Endothelial cell of umbilical vein (primary cell): ENCODE measurements at regions of chr1 and their contacts with region 1.

Region 1: GRCh38 chr1:201895913-201896807 is 7.5 kb downstream of the SHISA4 start:
- DNase-seq: peak; percentile 85
- H3K4me3 ChIP-seq: no peak overlapping the region
- H3K27ac ChIP-seq: no peak overlapping the region
- H3K4me1 ChIP-seq: peaks cover 4% of the 10 kb centered on the region
- H3K27me3 ChIP-seq: no peaks in the 10 kb centered on the region
- CTCF ChIP-seq: peak; percentile 94 to 96
- POLR2A ChIP-seq: no peak

Region 2: GRCh38 chr1:201916649-201917249 is 20.6 kb after region 1 on chr1:
- CTCF ChIA-PET with region 1: interaction called, 19 read pairs
- POLR2A ChIA-PET with region 1: no interaction called
- dilution Hi-C with region 1: no loop called
- intact Hi-C with region 1: loop called (anchors 2 kb)
- DNase-seq: peak; percentile 97
- H3K4me3 ChIP-seq: no peak overlapping the region
- H3K27ac ChIP-seq: peak overlapping the region; percentile 35
- H3K4me1 ChIP-seq: peaks cover 19% of the 10 kb centered on the region
- H3K27me3 ChIP-seq: no peaks in the 10 kb centered on the region
- CTCF ChIP-seq: no peak
- POLR2A ChIP-seq: peak; percentile 50

Region 3: DNA sequence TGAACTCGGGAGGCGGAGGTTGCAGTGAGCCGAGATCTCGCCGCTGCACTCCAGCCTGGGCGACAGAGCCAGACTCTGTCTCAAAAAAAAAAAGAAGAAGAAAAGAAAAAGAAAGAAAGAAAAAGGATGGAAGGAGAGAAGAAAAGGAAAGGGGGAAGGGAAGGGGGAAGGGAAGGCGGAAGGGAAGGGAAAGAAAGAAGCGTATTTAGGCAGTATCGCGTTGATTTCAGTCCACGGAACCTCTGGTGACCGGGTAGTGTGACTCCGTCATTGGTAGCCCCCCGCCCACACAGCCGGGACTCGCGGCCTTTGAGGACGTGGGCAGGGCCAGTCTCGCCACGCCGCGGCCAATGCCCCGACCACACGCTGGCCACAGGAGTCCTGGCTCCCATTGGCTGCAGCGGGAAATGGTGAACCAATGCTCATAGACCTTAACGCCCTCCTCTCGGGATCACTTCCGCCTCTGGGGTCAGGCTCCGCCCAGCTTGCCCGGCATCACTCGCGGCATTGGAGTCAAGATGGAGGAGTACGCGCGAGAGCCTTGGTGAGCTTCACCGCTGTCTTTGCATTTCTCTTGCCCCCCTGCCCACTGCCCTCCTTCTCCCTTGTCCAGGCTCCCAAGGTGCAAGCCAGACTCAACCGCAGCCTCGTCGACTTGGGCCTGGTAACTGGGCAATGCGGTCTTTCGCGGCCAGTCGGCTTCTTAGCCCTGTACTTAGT is 59.0 kb after region 1 on chr1 and contains the start of gene TIMM17A:
- CTCF ChIA-PET with region 1: interaction called, 54 read pairs
- POLR2A ChIA-PET with region 1: interaction called, 3 read pairs
- dilution Hi-C with region 1: no loop called
- intact Hi-C with region 1: loop called (anchors 1 kb)
- DNase-seq: peak; percentile 99
- H3K4me3 ChIP-seq: peak within 1 kb of the TSS; percentile 26 to 87 (median 68)
- H3K27ac ChIP-seq: peak within 1 kb of the TSS; percentile 71
- H3K4me1 ChIP-seq: peaks cover 10% of the 10 kb centered on the region
- H3K27me3 ChIP-seq: no peaks in the 10 kb centered on the region
- CTCF ChIP-seq: no peak
- POLR2A ChIP-seq: peak; percentile 97
- total RNA-seq, gene TIMM17A: 93.7 and 105 TPM in 2 replicates

Region 4: DNA sequence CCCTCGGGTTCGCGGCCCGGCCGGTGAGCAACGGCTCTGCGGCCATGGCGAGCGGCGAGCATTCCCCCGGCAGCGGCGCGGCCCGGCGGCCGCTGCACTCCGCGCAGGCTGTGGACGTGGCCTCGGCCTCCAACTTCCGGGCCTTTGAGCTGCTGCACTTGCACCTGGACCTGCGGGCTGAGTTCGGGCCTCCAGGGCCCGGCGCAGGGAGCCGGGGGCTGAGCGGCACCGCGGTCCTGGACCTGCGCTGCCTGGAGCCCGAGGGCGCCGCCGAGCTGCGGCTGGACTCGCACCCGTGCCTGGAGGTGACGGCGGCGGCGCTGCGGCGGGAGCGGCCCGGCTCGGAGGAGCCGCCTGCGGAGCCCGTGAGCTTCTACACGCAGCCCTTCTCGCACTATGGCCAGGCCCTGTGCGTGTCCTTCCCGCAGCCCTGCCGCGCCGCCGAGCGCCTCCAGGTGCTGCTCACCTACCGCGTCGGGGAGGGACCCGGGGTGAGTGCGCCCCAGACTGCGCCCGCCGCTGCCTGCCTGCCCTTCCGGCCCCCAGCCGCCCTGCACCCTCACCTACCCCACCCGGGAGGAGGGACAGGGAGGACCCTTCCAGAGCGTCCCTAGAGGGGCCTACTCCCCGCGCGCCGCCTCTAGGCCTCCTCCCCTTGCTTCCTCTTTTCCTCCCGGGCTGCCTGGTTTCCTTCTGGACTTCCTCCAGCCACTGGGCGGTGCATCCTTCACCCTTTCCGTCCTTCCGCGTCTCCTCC is 86.6 kb after region 1 on chr1 and contains the start of gene RNPEP:
- CTCF ChIA-PET with region 1: interaction called, 35 read pairs
- POLR2A ChIA-PET with region 1: interaction called, 4 read pairs
- dilution Hi-C with region 1: no loop called
- intact Hi-C with region 1: no loop called
- DNase-seq: peak; percentile 57
- H3K4me3 ChIP-seq: peak within 1 kb of the TSS; percentile 48 to 98 (median 75)
- H3K27ac ChIP-seq: peak within 1 kb of the TSS; percentile 18
- H3K4me1 ChIP-seq: peaks cover 8% of the 10 kb centered on the region
- H3K27me3 ChIP-seq: no peaks in the 10 kb centered on the region
- CTCF ChIP-seq: no peak
- POLR2A ChIP-seq: peak; percentile 90
- total RNA-seq, gene RNPEP: 65.7 and 73.5 TPM in 2 replicates

Region 5: DNA sequence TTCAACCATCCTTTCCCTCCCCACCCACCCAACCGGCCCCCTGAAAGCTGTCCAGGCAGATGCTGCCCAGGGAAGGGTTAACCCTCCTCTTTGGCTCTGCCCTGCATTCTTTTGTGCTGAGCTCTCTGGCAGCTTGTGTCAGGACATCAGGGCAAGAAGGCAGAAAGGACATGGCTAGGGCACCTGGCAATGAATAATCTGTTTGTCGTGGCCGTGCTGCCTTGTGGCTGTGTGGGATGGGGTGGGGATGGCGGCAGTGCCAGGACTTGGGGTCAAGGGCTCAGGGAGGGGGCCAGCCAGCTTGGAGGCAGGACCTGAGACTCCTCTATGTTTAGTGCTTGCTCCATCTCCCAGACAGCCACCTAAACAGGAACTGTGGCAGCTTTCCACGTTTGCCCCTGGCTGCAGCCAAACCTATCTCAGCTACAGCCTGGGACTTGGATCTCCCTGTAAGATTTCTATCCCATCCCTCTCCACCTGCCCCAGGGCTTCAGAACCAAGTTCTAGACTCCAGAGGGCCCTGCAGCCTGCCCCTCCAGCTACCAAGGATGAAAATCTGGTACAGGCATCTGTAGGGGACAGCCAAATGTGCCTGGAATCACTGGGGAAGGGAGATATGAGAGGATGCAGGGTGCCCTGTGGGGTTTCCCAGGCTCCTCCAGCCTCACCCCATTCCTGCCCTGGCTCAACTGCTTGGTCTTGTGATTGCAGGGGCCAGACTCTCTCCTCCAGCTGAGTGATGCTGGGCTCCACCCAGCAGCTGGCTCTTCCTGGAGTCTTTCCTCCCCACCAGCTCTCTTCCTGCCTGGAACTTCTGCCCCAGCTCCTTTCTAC is 216.9 kb after region 1 on chr1:
- CTCF ChIA-PET with region 1: interaction called, 3 read pairs
- POLR2A ChIA-PET with region 1: no interaction called
- dilution Hi-C with region 1: no loop called
- intact Hi-C with region 1: loop called (anchors 2 kb)
- DNase-seq: no peak
- H3K4me3 ChIP-seq: no peak overlapping the region
- H3K27ac ChIP-seq: no peak overlapping the region
- H3K4me1 ChIP-seq: no peaks in the 10 kb centered on the region
- H3K27me3 ChIP-seq: peaks cover 0 to 3% of the 10 kb centered on the region in 2 experiments
- CTCF ChIP-seq: no peak
- POLR2A ChIP-seq: no peak